MCF 10A (cell line): ENCODE measurements at regions of chr4 and their contacts with region 1.

Region 1: DNA sequence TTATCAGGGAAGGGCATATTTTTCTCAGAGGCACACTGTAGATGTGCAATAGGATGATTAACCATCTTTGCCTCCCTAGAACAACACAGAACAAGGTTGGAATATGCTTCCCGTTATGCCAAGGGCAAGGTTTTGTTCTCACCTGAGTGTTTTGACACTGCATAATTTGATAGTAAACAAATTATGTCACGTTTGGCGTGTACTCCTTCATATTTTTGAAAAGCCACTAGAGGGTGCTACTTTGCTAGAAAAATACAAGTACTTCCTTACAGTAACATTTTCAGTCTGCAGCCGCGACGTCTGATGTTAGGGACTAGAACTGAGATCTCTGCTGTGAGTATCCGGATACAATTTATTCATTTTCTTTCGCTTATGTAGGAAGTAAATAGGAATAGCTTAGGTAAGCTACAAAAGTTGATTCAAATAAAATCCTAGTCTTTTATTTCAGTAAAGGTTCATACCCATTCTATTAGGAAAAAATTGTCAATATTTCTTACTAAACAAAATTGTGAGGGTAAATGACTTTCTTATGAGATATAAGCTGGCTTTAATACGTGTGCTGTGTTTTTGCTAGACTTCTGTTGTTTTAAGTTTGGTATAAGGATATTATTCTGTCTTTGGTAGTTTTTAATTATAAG is 181.1 kb upstream of the WDFY3 start:
- DNase-seq: peak; percentile 74
- H3K4me3 Mint-ChIP-seq: no peak overlapping the region
- H3K27ac Mint-ChIP-seq: no peak overlapping the region
- H3K4me1 Mint-ChIP-seq: peaks cover 11% of the 10 kb centered on the region
- H3K27me3 Mint-ChIP-seq: no peaks in the 10 kb centered on the region
- CTCF ChIP-seq: peak; percentile 68

Region 2: DNA sequence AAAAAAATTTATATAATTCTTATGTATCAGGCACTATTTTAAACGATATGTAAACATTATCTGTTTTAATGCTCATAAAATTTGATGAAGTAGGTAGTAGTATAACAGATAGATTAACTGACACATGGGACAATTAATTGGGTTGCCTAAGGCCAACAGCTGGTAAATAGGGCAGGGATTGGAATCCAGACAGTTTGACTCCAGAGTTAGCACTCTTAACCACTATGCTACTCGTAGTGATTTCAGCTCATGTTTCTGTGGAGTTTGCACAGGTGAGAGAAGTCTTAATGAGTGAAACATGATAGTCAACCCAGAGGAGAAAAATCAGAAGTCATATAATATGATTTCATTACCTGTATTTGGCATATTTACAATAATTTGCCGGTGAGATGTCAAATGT is 55.0 kb before region 1 on chr4:
- CTCF ChIA-PET with region 1: no interaction called
- POLR2A ChIA-PET with region 1: no interaction called
- intact Hi-C with region 1: no loop called
- DNase-seq: no peak
- H3K4me3 Mint-ChIP-seq: no peak overlapping the region
- H3K27ac Mint-ChIP-seq: no peak overlapping the region
- H3K4me1 Mint-ChIP-seq: no peaks in the 10 kb centered on the region
- H3K27me3 Mint-ChIP-seq: no peaks in the 10 kb centered on the region
- CTCF ChIP-seq: no peak

Region 3: DNA sequence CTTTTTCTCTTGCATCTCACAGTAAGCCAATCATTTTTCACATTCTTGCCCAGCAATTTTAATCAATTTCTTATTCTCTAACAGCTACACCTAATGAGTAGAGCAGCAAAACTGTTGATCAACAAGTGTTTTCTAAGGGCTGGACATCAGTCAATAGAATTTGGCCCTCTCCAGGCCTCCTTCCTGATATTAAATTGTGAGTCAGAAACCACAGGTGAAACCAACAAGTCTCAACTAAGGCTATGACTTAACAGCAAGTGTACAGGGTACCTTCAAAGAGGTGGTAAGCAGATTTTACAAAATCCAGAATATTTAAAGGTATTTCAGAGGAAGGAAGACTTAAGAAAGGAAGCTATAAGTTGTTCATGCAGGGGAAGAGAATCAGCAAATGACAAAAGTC is 170.9 kb after region 1 on chr4:
- CTCF ChIA-PET with region 1: interaction called, 11 read pairs
- POLR2A ChIA-PET with region 1: no interaction called
- intact Hi-C with region 1: loop called (anchors 1 kb)
- DNase-seq: peak; percentile 41
- H3K4me3 Mint-ChIP-seq: no peak overlapping the region
- H3K27ac Mint-ChIP-seq: no peak overlapping the region
- H3K4me1 Mint-ChIP-seq: peaks cover 7% of the 10 kb centered on the region
- H3K27me3 Mint-ChIP-seq: no peaks in the 10 kb centered on the region
- CTCF ChIP-seq: no peak